A673 (cell line): ENCODE measurements at regions of chr11 and their contacts with region 1.

Region 1: GRCh38 chr11:50088231-50088630 is 55.6 kb downstream of the OR4C45 start:
- DNase-seq: no peak
- H3K4me3 ChIP-seq: no peak overlapping the region
- H3K27ac ChIP-seq: no peak overlapping the region
- H3K4me1 ChIP-seq: no peaks in the 10 kb centered on the region
- H3K27me3 ChIP-seq: no peaks in the 10 kb centered on the region
- CTCF ChIP-seq: no peak

Region 2: DNA sequence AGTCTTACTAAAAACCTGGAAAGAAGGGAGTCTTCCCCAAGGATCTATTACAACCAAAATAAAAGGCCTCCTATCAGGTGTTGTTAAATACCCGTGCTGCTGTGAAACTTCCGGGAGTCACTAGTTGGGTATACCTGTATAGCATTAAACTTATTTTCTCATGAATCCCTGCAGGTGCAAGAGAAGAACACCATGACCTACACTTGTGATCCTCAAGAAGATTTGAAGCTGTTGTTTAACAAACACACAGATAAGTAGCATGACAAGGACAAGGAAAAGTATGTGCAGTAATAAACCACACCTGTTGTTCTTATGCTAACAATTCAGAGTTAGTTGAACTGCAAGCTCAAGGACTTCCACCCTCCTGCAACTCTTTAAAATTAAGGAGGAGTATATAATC is 43.6 kb before region 1 on chr11:
- CTCF ChIA-PET with region 1: no interaction called
- POLR2A ChIA-PET with region 1: no interaction called
- intact Hi-C with region 1: loop called (anchors 5 kb)
- DNase-seq: no peak
- H3K4me3 ChIP-seq: no peak overlapping the region
- H3K27ac ChIP-seq: no peak overlapping the region
- H3K4me1 ChIP-seq: no peaks in the 10 kb centered on the region
- H3K27me3 ChIP-seq: peaks cover 3% of the 10 kb centered on the region
- CTCF ChIP-seq: no peak

Region 3: DNA sequence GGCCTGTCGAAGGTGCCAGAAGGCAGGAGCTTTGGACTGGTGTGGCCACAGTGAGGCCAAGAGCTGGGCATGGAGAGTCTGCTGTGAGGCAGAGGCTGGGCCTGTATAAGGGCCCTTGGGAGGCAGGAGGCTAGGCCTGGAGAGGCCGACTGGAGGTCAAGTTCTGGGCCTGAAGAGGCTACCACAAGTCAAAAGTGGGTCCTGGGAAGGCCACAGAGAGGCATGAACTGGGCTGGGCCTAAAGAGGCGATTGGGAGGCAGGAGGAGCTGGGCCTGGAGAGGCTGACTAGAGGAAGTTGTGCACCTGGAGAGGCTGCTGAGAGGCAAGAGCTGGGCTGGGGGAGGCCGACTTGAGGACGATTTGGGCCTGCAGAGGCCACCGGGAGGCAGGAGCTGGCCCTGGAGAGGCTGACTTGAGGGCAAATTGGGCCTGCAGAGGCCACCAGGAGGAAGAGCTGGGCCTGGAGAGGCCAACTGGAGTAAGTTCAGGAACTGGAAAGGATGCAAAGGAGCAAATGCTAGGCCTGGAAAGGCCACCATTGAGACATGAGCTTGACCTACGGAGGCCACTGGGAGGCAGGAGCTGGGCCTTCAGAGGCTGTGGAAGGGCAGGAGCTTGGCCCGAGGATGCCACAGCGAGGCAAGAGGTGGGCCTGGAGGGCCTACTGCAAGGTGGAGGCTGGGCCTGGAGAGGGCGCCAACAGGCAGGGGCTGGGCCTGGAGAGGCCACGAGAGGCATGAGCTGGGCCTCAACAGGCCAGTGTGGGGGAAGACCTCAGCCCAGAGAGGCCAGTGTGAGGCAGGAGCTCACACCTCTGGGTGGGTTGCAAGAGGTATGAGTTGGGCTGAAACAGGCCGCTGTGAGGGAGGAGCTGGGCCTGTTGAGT is 15.8 kb before region 1 on chr11:
- CTCF ChIA-PET with region 1: no interaction called
- POLR2A ChIA-PET with region 1: no interaction called
- intact Hi-C with region 1: no loop called
- DNase-seq: no peak
- H3K4me3 ChIP-seq: no peak overlapping the region
- H3K27ac ChIP-seq: no peak overlapping the region
- H3K4me1 ChIP-seq: no peaks in the 10 kb centered on the region
- H3K27me3 ChIP-seq: no peaks in the 10 kb centered on the region
- CTCF ChIP-seq: no peak